ENCODE measurements at regions of chr1 and their contacts with region 1.

Region 1: GRCh38 chr1:60822231-60822630 is 260.1 kb upstream of the NFIA start:
- DNase-seq: no peak
- ATAC-seq: no peak
- H3K4me3 ChIP-seq: no peak overlapping the region
- H3K27ac ChIP-seq: no peak overlapping the region
- H3K4me1 ChIP-seq: no peaks in the 10 kb centered on the region
- H3K27me3 ChIP-seq: no peaks in the 10 kb centered on the region
- CTCF ChIP-seq: no peak

Region 2: DNA sequence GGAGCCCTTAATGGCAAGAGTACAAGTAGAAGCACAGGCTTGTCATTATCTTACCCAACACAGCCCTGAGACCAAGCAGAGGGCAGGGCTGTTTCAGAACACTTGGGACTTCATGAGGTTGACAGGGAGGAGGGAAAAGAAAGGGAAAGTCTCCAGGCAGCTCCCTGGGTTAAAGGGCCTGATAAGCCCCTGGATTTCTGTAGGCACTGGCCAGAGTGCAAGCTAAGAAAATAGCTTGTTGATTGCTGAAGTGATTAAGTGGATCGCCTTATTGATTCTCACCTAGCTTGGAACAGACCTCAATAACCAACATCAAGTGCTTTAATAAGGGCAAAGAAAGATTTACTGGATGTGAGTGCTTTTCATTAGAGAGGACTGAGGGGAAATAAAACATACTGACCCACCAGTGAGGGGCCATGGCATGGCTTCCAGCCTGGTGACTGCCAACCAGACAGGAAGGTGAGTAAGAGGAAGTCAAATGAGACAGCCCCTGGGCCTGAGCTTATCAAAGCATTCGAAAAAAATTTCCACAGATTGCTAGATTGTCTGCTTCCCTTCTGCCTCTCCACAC is 138.7 kb after region 1 on chr1:
- CTCF ChIA-PET with region 1: no interaction called
- POLR2A ChIA-PET with region 1: interaction called, 10 read pairs
- in situ Hi-C with region 1: no loop called
- intact Hi-C with region 1: no loop called
- DNase-seq: no peak
- ATAC-seq: no peak
- H3K4me3 ChIP-seq: no peak overlapping the region
- H3K27ac ChIP-seq: no peak overlapping the region
- H3K4me1 ChIP-seq: no peaks in the 10 kb centered on the region
- H3K27me3 ChIP-seq: peaks cover 12% of the 10 kb centered on the region
- CTCF ChIP-seq: no peak

Measured in Panc1 (cell line).